Psoas muscle (tissue), 8 donors: ENCODE measurements at regions of chr5 and their contacts with region 1.

Region 1: GRCh38 chr5:115069087-115069968 is 100.4 kb downstream of the TRIM36 start:
- DNase-seq: no peak
- ATAC-seq: no peak
- H3K4me3 ChIP-seq: no peak overlapping the region
- H3K27ac ChIP-seq: no peak overlapping the region
- H3K4me1 ChIP-seq: no peaks in the 10 kb centered on the region
- H3K27me3 ChIP-seq: no peaks in the 10 kb centered on the region
- CTCF ChIP-seq: peak; percentile 45

Region 2: DNA sequence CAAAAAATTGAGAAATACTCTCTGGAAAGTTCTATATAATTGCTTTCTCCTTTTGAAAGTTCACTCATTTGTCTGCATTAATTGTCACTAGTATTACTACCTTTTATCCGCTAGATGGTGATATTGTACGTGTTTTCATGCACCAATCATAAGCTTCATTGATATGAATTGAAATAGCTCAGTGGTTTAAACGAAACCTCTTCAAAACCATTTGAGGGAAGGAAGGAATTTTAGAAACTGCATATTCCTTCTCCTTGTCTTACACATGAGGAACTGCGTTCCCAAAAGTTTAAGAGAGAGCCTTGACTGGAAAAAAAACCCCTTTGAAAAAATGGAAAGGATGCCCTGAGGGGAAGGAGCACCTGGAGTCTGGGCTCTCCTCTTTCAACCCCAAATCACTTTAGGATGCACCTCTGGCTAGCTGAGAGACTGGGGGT is 1457.2 kb before region 1 on chr5:
- intact Hi-C with region 1: loop called in 1 of 2 experiments (anchors 5 kb)
- DNase-seq: no peak
- ATAC-seq: peak in 3 of 4 donors; percentile 49 to 80 (median 58)
- H3K4me3 ChIP-seq: no peak overlapping the region
- H3K27ac ChIP-seq: no peak overlapping the region
- H3K4me1 ChIP-seq: no peaks in the 10 kb centered on the region
- H3K27me3 ChIP-seq: peaks cover 0 to 5% (median 0%) of the 10 kb centered on the region in 3 donors
- CTCF ChIP-seq: peak; percentile 65